ENCODE measurements at regions of chrX and their contacts with region 1.

Region 1: DNA sequence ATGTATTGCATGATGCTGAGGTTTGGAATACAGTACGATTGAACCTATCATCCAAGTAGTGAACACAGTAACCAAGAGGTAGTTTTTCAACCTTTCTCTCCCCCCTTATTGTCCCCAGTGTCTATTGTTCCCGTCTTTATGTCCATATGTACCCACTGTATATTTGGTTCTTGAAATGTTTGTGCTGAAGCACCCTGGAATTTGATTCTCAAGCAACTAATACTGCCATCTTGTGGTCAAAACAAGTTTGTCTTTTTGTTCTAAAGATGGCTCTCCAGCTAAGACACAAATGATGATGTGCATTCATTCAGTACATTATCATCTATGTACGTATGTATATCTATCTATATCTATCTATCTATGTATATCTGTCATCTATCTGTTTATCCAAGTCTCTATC is 33.5 kb upstream of the DCX start:
- DNase-seq: no peak
- H3K4me3 Mint-ChIP-seq: no peak overlapping the region
- H3K27ac Mint-ChIP-seq: no peak overlapping the region
- H3K4me1 Mint-ChIP-seq: no peaks in the 10 kb centered on the region
- H3K27me3 Mint-ChIP-seq: peaks cover 3% of the 10 kb centered on the region

Region 2: DNA sequence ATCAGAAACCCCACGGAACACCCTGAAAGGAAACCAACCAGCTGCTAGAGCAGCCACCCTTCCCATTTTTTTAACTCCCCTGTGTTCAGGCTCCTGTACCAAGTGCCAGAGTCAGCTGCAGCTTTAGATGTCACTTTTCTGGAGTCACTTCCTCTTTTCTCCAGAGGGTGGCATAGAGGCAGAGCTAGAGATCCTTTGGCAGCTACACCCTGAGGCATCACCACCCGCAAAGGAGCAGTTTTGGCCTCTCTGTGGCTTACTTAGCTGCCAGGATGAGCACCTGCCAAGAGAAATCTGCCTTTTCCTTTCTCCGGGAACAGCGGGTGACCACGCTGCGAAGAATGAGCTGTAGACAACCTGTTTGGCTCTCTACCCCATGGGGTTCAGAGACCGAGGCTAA is 591.9 kb before region 1 on chrX:
- CTCF ChIA-PET with region 1: interaction called, 3 read pairs
- POLR2A ChIA-PET with region 1: no interaction called
- intact Hi-C with region 1: loop called (anchors 5 kb)
- DNase-seq: no peak
- H3K4me3 Mint-ChIP-seq: no peak overlapping the region
- H3K27ac Mint-ChIP-seq: no peak overlapping the region
- H3K4me1 Mint-ChIP-seq: no peaks in the 10 kb centered on the region
- H3K27me3 Mint-ChIP-seq: peaks cover 2% of the 10 kb centered on the region

Region 3: GRCh38 chrX:110992611-110993010 is 452.9 kb before region 1 on chrX:
- CTCF ChIA-PET with region 1: interaction called, 3 read pairs
- POLR2A ChIA-PET with region 1: no interaction called
- intact Hi-C with region 1: loop called (anchors 10 kb)
- DNase-seq: peak; percentile 22
- H3K4me3 Mint-ChIP-seq: no peak overlapping the region
- H3K27ac Mint-ChIP-seq: no peak overlapping the region
- H3K4me1 Mint-ChIP-seq: no peaks in the 10 kb centered on the region
- H3K27me3 Mint-ChIP-seq: peaks cover 2% of the 10 kb centered on the region

Region 4: DNA sequence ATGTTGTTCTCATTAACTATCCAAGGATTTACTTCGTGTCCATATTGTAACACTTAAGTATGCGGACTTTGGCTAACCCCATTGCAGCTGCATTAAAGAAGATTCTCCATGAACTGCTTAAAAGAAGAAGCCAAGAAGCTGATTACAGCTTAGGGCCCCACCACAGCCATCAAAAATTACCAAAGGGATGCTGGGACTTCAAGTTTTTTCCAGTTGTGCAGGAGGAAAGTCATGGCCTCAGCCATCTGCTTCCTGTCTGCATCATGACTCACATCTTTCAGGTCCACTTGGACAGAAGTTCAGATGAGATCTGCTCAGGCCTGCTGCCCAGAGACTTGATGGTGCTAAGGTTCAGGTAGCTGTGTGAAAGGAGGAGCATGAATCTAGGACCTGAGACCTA is 136.4 kb before region 1 on chrX:
- CTCF ChIA-PET with region 1: no interaction called
- POLR2A ChIA-PET with region 1: no interaction called
- intact Hi-C with region 1: no loop called
- DNase-seq: no peak
- H3K4me3 Mint-ChIP-seq: no peak overlapping the region
- H3K27ac Mint-ChIP-seq: no peak overlapping the region
- H3K4me1 Mint-ChIP-seq: no peaks in the 10 kb centered on the region
- H3K27me3 Mint-ChIP-seq: no peaks in the 10 kb centered on the region

Region 5: DNA sequence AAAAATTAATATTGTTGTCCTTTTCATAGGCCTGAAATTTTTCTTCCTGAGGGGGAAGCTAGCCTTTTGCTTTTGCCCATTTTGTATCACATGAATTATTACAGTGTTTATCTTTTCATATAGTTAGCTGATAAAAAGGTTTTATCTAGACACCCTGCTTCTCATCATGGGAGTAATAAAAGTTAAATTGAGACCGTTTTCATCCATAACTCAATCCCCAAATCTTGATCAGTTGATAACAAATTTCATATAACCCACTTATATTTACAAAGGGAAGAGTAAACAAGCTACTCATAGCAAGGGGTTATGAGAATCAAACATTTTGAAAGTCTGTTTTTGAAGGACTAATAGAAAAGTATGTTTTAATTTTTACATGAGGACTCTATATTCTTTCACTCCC is 10.0 kb before region 1 on chrX:
- CTCF ChIA-PET with region 1: interaction called, 12 read pairs
- POLR2A ChIA-PET with region 1: no interaction called
- intact Hi-C with region 1: no loop called
- DNase-seq: no peak
- H3K4me3 Mint-ChIP-seq: no peak overlapping the region
- H3K27ac Mint-ChIP-seq: no peak overlapping the region
- H3K4me1 Mint-ChIP-seq: no peaks in the 10 kb centered on the region
- H3K27me3 Mint-ChIP-seq: peaks cover 6% of the 10 kb centered on the region

Measured in activated CD4-positive, alpha-beta memory T cell treated with anti-CD3 and anti-CD28 coated beads for 36 hours (primary cell).